Gastrocnemius medialis (tissue), 4 donors: ENCODE measurements at regions of chr6 and their contacts with region 1.

Region 1: GRCh38 chr6:118748311-118749062 is 97.1 kb upstream of the CEP85L start:
- DNase-seq: peak; percentile 48 to 67
- ATAC-seq: peak; percentile 74 to 76
- H3K4me3 ChIP-seq: peak overlapping the region; percentile 19 to 52 (median 42)
- H3K27ac ChIP-seq: peak overlapping the region; percentile 86 to 95 (median 90)
- H3K4me1 ChIP-seq: peaks cover 28 to 47% of the 10 kb centered on the region in 2 donors
- H3K27me3 ChIP-seq: no peaks in the 10 kb centered on the region
- CTCF ChIP-seq: no peak
- POLR2A ChIP-seq: no peak

Region 2: DNA sequence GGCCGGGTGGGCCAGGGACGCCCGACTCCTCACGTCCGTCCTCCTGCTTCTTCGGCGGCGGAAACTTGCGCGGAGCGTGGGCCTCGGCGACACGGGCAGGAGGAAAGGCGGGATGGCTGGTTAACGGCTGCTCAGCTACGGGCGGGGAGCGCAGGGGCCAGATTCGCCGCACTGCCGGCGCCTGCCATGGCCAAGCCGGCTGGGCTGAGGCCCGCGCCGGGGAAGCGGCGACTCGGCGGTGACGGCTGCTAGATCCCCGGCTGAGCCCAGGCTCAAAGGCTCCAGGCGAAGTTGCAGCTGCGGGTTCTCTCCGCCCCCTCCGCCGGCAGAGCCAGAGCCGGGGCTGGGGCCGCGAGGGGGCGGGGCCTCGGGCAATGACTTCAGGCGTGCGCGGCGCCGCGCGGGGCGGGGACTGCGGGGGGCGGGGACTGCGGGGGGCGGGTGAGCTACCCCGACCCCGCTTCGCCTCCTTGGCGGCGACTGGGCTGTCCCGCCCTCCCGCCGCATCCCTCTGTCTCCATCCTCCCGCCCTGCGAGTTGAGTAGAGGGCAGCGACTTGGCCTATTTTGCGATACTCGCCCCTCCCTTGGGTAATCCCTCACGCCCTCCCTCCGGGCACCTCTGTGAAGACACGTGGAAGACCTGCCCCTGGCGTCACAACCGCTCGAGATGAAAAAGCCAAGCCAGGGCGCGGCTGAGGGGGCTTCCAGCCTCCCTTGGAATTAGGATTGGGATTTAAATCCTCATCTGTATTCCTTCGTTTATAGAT is 97.0 kb before region 1 on chr6 and contains the start of gene CEP85L:
- in situ Hi-C with region 1: no loop called
- intact Hi-C with region 1: loop called (anchors 1 kb)
- DNase-seq: peak; percentile 83 to 89
- ATAC-seq: peak; percentile 87 to 89
- H3K4me3 ChIP-seq: peak within 1 kb of the TSS; percentile 86 to 100 (median 92)
- H3K27ac ChIP-seq: peak within 1 kb of the TSS; percentile 97 to 100 (median 98)
- H3K4me1 ChIP-seq: peaks cover 26 to 36% of the 10 kb centered on the region in 2 donors
- H3K27me3 ChIP-seq: no peaks in the 10 kb centered on the region
- CTCF ChIP-seq: peak in 3 of 5 experiments; percentile 2 to 44 (median 15)
- POLR2A ChIP-seq: peak; percentile 93 to 95
- total RNA-seq, gene CEP85L: 15.6 to 22.8 (median 21.9) TPM

Region 3: DNA sequence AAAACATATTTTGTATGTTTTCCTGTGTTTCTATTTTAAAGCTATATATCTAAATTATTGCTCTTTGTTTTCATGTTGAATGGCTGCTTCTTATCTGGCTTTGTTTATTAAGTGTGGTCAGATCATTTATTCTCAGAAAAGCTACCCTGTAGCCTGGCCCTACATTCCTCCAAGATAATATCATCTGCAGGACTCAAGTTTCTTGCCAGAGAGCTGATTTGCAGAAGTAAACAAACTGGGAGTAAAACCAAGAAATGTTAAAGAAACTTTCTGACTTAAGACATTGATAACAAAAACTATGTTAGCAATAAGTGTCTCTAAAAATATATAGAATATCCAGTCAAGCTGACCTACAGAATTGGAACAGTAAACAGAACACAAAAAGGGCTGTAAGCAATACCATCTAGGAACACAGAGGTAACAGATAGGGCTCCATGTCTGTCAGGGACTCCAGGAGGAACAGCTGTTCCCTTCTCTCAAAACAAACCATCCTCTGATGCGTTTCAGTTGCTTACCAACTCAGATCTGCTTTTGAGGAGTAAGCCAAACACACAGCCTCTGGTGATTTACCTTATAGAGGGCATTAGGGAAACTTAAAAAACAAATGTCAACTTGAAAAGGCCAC is 79.6 kb before region 1 on chr6:
- in situ Hi-C with region 1: no loop called
- intact Hi-C with region 1: loop called (anchors 5 kb)
- DNase-seq: peak; percentile 33 to 49
- ATAC-seq: peak; percentile 98
- H3K4me3 ChIP-seq: peak overlapping the region in 1 of 4 donors; percentile 0
- H3K27ac ChIP-seq: peak overlapping the region; percentile 80 to 89 (median 82)
- H3K4me1 ChIP-seq: peaks cover 62 to 67% of the 10 kb centered on the region in 2 donors
- H3K27me3 ChIP-seq: no peaks in the 10 kb centered on the region
- CTCF ChIP-seq: peak in 1 of 5 experiments; percentile 4
- POLR2A ChIP-seq: no peak

Region 4: GRCh38 chr6:118697554-118697953 is 50.9 kb before region 1 on chr6:
- in situ Hi-C with region 1: no loop called
- intact Hi-C with region 1: loop called (anchors 10 kb)
- DNase-seq: no peak
- ATAC-seq: peak; percentile 32 to 50
- H3K4me3 ChIP-seq: no peak overlapping the region
- H3K27ac ChIP-seq: peak overlapping the region in 2 of 4 donors; percentile 11 to 24
- H3K4me1 ChIP-seq: peaks cover 18 to 34% of the 10 kb centered on the region in 2 donors
- H3K27me3 ChIP-seq: no peaks in the 10 kb centered on the region
- CTCF ChIP-seq: peak in 2 of 5 experiments; percentile 23 to 28
- POLR2A ChIP-seq: no peak

Region 5: GRCh38 chr6:118735320-118735719 is 13.2 kb before region 1 on chr6:
- in situ Hi-C with region 1: no loop called
- intact Hi-C with region 1: no loop called
- DNase-seq: no peak
- ATAC-seq: no peak
- H3K4me3 ChIP-seq: no peak overlapping the region
- H3K27ac ChIP-seq: no peak overlapping the region
- H3K4me1 ChIP-seq: peaks cover 4 to 8% of the 10 kb centered on the region in 2 donors
- H3K27me3 ChIP-seq: no peaks in the 10 kb centered on the region
- CTCF ChIP-seq: peak in 1 of 5 experiments; percentile 48
- POLR2A ChIP-seq: no peak